Colonic mucosa (tissue), 4 donors: ENCODE measurements at regions of chr5 and their contacts with region 1.

Region 1: DNA sequence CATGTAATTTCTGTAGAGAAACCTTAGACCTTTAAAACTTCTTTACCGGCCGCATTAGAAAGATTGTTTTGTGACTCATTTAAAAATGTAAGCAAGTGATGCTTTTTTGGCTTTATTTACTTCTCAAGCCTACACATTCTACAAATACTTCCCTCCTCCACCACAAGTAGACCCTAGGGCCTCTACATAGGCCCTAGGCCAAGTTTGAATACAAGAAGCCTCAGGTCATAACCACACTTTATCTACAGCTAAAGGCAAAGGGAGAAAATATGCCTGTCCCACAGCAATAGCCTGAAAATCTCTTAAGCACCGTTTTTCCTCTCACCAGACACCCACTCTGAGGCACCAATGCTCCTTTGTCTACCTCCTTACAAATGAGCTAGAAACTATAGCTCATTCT is 53.9 kb downstream of the CSNK1A1 start:
- DNase-seq: no peak
- H3K4me3 ChIP-seq: no peak overlapping the region
- H3K27ac ChIP-seq: peak overlapping the region; percentile 3
- H3K4me1 ChIP-seq: no peaks in the 10 kb centered on the region
- H3K27me3 ChIP-seq: no peaks in the 10 kb centered on the region
- CTCF ChIP-seq: no peak

Region 2: GRCh38 chr5:149240354-149240998 is 256.9 kb before region 1 on chr5:
- intact Hi-C with region 1: no loop called
- DNase-seq: peak; percentile 35
- H3K4me3 ChIP-seq: no peak overlapping the region
- H3K27ac ChIP-seq: peak overlapping the region; percentile 50
- H3K4me1 ChIP-seq: no peaks in the 10 kb centered on the region
- H3K27me3 ChIP-seq: no peaks in the 10 kb centered on the region
- CTCF ChIP-seq: no peak

Region 3: GRCh38 chr5:149549461-149550267 is 52.3 kb after region 1 on chr5:
- intact Hi-C with region 1: loop called (anchors 5 kb)
- DNase-seq: peak; percentile 56
- H3K4me3 ChIP-seq: peak overlapping the region; percentile 75
- H3K27ac ChIP-seq: peak overlapping the region; percentile 98
- H3K4me1 ChIP-seq: no peaks in the 10 kb centered on the region
- H3K27me3 ChIP-seq: no peaks in the 10 kb centered on the region
- CTCF ChIP-seq: no peak